Heart right ventricle (tissue), 16 donors: ENCODE measurements at regions of chr9 and their contacts with region 1.

Region 1: GRCh38 chr9:78725503-78725902 is 428.6 kb downstream of the PSAT1 start:
- DNase-seq: no peak
- ATAC-seq: no peak
- H3K4me3 ChIP-seq: no peak overlapping the region
- H3K27ac ChIP-seq: no peak overlapping the region
- H3K4me1 ChIP-seq: no peaks in the 10 kb centered on the region
- H3K27me3 ChIP-seq: no peaks in the 10 kb centered on the region
- CTCF ChIP-seq: no peak

Region 2: GRCh38 chr9:78713614-78714405 is 11.7 kb before region 1 on chr9:
- intact Hi-C with region 1: loop called in 1 of 10 experiments (anchors 1 kb)
- DNase-seq: no peak
- ATAC-seq: no peak
- H3K4me3 ChIP-seq: no peak overlapping the region
- H3K27ac ChIP-seq: no peak overlapping the region
- H3K4me1 ChIP-seq: no peaks in the 10 kb centered on the region
- H3K27me3 ChIP-seq: no peaks in the 10 kb centered on the region
- CTCF ChIP-seq: no peak

Region 3: DNA sequence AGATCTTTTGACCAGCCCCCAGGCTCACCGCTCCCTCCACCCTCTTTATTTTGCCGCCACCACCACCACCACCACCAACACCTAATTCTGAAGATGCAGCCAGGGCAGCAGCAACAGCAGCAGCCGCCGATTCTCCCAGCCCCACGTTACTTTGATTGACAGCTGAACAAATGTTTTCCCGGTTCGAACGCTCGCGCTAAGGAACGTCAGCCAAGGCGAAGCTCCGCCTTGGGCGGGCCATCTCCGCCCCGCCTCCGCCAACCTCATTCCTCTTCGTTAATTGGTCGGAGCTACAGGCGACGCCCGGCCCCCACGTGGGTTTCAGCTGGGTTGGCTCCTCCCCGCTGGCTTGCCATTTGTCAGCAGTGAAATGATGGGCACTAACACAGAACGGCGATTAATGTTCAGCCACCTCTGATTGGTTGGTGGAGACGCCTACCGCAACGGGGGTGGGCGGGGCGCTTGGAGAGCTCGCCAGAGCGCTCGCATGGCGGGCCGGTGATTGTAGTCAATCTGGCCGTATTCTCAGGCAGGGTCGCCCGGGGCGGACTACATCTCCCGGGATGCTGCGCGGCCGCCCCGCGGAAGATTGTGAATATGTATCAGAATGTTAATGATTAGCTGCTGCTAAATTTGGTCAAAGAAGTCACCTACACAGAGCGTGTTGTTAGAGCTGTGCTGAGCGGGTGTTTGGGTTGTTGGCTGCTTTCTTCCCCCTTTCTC is 846.0 kb after region 1 on chr9 and contains the start of gene TLE4:
- intact Hi-C with region 1: no loop called
- DNase-seq: peak; percentile 98 to 100
- ATAC-seq: peak; percentile 95 to 99 (median 98)
- H3K4me3 ChIP-seq: peak within 1 kb of the TSS; percentile 74 to 98 (median 95)
- H3K27ac ChIP-seq: peak within 1 kb of the TSS; percentile 34 to 96 (median 93)
- H3K4me1 ChIP-seq: peaks cover 0 to 48% (median 33%) of the 10 kb centered on the region in 9 donors
- H3K27me3 ChIP-seq: peaks cover 0 to 16% (median 0%) of the 10 kb centered on the region in 7 donors
- CTCF ChIP-seq: no peak
- total RNA-seq, gene TLE4: 9.5 to 17.3 (median 13.1) TPM